MCF 10A (cell line): ENCODE measurements at regions of chr5 and their contacts with region 1.

Region 1: GRCh38 chr5:177303121-177303924 is at the starts of genes PRELID1 and RAB24:
- DNase-seq: peak; percentile 86
- H3K4me3 Mint-ChIP-seq: peak within 1 kb of the TSS; percentile 87
- H3K27ac Mint-ChIP-seq: peak within 1 kb of the TSS; percentile 73
- H3K4me1 Mint-ChIP-seq: peaks cover 57% of the 10 kb centered on the region
- H3K27me3 Mint-ChIP-seq: no peaks in the 10 kb centered on the region
- CTCF ChIP-seq: peak; percentile 59
- total RNA-seq, gene PRELID1: 217 and 267 TPM in 2 replicates
- total RNA-seq, gene RAB24: 34.3 and 42.6 TPM in 2 replicates

Region 2: DNA sequence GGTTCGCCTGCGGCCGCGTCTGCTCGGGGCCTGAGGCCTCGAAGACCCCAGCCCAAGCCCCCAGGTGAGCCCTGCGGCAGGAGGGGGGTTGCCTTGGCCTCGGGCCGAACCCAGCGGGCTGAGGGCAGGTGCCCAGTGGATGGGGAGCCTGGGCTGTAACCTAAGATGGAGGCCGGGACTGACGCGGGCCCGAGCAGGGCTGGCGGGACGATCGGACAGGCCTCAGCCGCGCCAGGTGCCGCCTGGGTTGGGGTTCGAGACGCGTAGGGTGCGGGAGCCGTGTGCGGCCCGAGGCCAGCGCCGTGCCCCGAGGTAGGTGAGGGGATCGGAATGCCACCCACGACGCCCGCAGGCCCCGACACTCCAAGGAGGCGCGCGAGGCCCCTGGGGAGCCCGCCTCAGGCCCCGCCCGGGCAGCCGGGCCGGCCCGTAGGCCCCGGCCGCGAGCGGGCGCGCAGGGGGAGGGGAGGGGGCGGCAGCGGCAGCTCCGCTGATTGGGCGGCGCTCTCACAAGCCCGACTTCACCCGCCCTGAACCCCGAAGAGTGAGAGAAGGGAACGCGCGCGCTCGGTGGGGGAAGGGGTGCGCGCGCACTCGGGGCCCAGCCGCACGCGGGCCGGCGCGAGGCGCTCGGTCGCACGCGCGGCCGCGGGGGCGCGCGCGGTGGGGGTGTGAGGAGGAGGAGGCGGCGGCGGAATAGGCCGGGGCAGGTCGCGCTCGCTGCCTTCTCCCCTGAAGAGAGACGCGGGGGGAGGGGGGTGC is 170.1 kb before region 1 on chr5 and contains the start of gene NSD1:
- CTCF ChIA-PET with region 1: interaction called, 9 read pairs
- POLR2A ChIA-PET with region 1: interaction called, 15 read pairs
- intact Hi-C with region 1: no loop called
- DNase-seq: peak; percentile 83
- H3K4me3 Mint-ChIP-seq: peak within 1 kb of the TSS; percentile 74
- H3K27ac Mint-ChIP-seq: peak within 1 kb of the TSS; percentile 65
- H3K4me1 Mint-ChIP-seq: peaks cover 25% of the 10 kb centered on the region
- H3K27me3 Mint-ChIP-seq: no peaks in the 10 kb centered on the region
- CTCF ChIP-seq: no peak
- total RNA-seq, gene NSD1: 110 and 111 TPM in 2 replicates

Region 3: GRCh38 chr5:177271113-177271512 is 32.2 kb before region 1 on chr5:
- CTCF ChIA-PET with region 1: interaction called, 8 read pairs
- POLR2A ChIA-PET with region 1: interaction called, 12 read pairs
- intact Hi-C with region 1: no loop called
- DNase-seq: no peak
- H3K4me3 Mint-ChIP-seq: no peak overlapping the region
- H3K27ac Mint-ChIP-seq: peak overlapping the region; percentile 50
- H3K4me1 Mint-ChIP-seq: peaks cover 17% of the 10 kb centered on the region
- H3K27me3 Mint-ChIP-seq: no peaks in the 10 kb centered on the region
- CTCF ChIP-seq: no peak